Activated T-helper 2 cell treated with anti-CD3 and anti-CD28 coated beads, Interferon-gamma antibody, Interleukin-2, Interleukin-4, amounts not matched to agents 10 μg/mL and 5 μg/mL and 100 μg/mL, durations not matched to agents 14 hours and 24 hours and 36 hours (primary cell): ENCODE measurements at regions of chr1 and their contacts with region 1.

Region 1: DNA sequence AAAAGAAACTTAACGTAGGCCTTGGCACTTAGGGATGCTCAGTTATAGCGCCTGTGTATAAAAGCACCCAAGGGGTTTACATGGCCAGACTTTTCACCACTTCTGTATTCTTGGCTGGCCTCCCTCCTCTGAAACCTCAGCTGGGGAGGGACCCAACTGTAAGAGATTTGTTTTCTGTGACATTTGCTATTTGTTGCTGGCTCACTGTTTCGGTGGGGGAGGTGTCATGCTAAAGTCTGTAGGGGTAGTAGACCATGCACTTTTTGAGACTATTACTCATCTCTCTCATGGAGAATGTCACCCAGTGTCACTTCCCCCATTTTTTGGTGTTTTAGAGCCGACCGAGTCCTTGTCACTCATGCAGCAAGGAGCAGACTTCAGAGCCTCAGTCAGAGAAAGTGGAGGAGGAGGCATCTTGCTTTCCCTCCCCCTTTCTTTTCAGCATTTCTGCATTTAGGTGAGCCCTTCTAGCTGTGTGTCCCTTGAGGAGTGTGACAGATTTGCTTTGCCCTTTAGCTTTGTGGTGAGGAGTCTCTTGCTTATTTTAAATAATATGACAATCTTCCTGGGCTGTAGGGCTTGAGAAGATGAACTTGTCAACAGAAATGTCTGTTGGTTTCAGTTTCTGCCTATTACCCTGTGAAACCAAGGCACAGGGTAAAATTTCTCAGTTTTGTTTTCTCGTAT is 160.1 kb downstream of the FASLG start:
- DNase-seq: peak; percentile 33
- H3K4me3 Mint-ChIP-seq: peak overlapping the region; percentile 46
- H3K27ac Mint-ChIP-seq: peak overlapping the region; percentile 67
- H3K4me1 Mint-ChIP-seq: peaks cover 45% of the 10 kb centered on the region
- H3K27me3 Mint-ChIP-seq: peaks cover 15% of the 10 kb centered on the region

Region 2: DNA sequence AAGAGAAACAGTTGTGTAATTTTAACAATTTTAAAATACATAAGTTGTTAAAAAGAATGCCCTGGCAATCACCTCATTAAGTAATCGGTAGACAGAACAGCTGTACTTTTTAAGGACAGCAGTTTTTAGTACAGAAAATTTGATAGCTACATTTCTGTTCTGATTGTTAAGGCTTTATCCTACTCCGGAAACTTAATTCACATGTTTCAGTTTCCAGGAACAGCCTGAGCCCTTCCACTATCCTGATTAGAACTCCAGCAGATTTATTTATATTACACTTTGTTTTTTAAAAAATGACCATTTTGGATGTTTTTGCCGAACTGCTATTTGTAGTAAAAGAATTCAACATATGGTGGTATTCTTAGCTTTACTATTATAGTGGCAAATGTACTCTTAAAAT is 1324.9 kb before region 1 on chr1:
- intact Hi-C with region 1: loop called (anchors 5 kb)
- DNase-seq: no peak
- H3K4me3 Mint-ChIP-seq: no peak overlapping the region
- H3K27ac Mint-ChIP-seq: no peak overlapping the region
- H3K4me1 Mint-ChIP-seq: peaks cover 53% of the 10 kb centered on the region
- H3K27me3 Mint-ChIP-seq: no peaks in the 10 kb centered on the region

Region 3: DNA sequence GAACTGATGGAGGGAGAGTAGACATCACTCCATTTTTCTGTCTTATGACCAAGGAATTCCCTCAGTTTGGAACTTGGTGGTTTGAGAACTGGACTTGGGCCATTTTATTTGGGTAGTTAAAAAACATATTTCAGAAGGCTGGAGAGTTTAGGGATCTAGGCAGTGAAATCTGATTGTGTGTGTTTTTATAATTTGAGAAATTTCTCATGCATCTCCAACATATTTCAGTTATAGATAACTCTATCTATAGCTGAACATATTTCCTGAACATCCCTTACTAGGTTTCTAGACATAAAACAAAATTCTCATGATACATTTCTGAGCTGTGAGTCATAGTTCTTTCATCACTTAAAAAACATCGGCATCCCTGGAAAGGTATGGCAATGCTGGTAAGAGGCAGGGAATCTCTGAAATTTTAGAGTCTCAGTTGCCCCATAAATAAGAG is 57.4 kb before region 1 on chr1:
- intact Hi-C with region 1: loop called (anchors 5 kb)
- DNase-seq: no peak
- H3K4me3 Mint-ChIP-seq: no peak overlapping the region
- H3K27ac Mint-ChIP-seq: no peak overlapping the region
- H3K4me1 Mint-ChIP-seq: peaks cover 37% of the 10 kb centered on the region
- H3K27me3 Mint-ChIP-seq: peaks cover 42% of the 10 kb centered on the region

Region 4: DNA sequence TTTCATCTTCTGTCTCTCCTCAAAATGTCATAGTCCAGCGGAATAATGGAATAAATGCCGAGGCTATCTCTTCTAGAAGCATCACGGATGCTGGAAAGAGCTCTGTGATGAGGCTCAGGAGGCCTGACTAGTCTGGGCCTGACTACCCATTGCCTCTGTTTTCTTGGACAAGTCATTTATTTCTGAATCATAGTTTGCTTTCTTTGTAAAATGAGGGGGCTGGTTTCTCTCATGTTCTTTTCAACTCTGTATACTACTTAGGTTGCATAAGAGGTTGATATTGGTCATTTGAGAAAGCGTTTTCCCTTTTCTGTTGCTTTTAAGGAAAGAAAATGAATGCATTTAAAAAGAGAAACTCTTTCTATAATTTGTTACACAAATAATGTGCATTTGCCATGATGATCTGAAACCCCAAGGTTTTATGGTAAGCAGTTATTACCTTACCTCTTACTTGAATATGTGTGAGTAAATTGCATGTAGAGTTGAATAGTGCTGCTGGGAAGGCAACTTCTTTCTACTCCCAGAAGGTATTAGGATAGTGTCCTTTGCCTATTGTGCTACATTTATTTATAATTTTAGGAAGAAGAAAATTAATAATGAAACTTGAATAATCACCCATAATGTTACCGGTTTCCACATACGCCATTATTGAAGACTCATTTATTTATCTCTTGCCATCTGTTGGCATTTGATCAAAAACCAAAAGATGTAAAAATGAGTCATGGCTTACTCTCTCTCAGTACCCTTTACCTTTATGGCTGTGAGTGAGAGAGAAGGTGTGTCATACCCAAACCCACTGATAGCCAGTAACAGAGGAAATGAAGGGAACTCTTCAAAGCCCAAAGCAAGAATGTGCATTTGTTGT is 19.1 kb after region 1 on chr1:
- intact Hi-C with region 1: loop called (anchors 1 kb)
- DNase-seq: no peak
- H3K4me3 Mint-ChIP-seq: no peak overlapping the region
- H3K27ac Mint-ChIP-seq: no peak overlapping the region
- H3K4me1 Mint-ChIP-seq: peaks cover 29% of the 10 kb centered on the region
- H3K27me3 Mint-ChIP-seq: peaks cover 53% of the 10 kb centered on the region

Region 5: GRCh38 chr1:172895050-172895460 is 76.1 kb after region 1 on chr1:
- intact Hi-C with region 1: loop called (anchors 1 kb)
- DNase-seq: peak; percentile 20
- H3K4me3 Mint-ChIP-seq: peak overlapping the region; percentile 59
- H3K27ac Mint-ChIP-seq: peak overlapping the region; percentile 0
- H3K4me1 Mint-ChIP-seq: peaks cover 39% of the 10 kb centered on the region
- H3K27me3 Mint-ChIP-seq: peaks cover 46% of the 10 kb centered on the region

Region 6: DNA sequence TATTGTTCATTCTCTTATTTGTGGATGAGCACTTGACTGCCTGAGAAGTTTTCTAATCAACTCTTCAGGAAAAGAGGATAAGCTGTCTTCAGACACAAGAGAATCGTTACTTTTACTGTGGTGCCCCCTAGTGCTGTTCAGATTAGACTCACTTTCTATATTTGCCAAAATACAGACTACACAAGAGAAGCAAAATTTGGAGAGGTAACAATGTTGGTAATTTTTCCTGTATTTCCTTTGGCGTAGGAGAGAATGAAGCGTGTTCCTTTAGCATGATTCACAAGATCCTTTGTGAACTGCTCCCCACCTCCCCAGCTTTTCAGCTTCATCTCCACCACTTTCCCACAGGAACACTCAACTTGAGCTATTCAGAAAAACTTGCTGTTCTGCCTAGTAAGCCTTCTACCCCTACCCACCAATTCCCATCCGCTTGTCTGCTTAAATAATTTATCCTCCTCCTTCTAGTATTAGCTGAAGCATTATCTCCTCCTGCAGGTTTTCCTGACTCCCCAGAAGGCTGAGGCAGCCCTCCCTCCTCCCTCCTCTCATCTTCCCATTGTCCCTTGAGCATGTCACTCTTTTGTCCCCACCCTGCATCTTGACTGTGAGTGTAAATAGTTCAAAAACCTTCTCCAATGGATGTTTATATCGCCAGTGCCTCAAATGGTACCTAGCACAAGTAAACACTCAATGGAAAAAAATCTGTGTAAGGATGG is 383.6 kb after region 1 on chr1:
- intact Hi-C with region 1: loop called (anchors 2 kb)
- DNase-seq: no peak
- H3K4me3 Mint-ChIP-seq: no peak overlapping the region
- H3K27ac Mint-ChIP-seq: no peak overlapping the region
- H3K4me1 Mint-ChIP-seq: peaks cover 31% of the 10 kb centered on the region
- H3K27me3 Mint-ChIP-seq: peaks cover 49% of the 10 kb centered on the region